ENCODE measurements at regions of chr3 and their contacts with region 1.

Region 1: DNA sequence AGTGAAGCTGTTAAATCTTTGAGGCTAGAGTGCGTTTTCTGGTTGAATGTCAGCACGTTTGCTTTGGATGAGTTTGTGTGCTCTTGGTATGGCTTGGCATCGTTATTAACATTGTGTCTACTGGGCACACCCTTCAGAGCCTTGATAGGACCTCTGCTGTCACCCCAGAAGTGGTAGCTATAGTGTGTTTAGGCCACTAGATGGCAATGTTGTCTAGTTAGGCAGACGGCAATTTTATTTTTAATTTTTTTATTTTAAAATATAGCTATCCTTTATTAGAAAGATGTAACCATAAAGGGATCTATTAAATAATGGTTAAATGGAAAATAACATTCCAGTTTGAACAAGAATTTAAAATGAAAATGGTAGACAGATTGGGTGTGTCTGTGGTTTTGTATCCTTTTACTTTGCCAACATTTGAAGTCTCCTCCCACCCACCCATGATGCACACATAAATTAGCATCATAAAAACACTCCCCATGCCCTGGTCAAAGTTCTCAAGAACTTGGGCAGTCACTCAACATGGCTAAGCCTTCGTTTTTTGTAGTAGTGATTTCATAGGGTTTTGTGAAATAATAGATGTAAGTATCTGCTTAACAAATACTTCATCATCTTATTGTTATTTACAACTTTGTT is 200.7 kb downstream of the KCNH8 start:
- DNase-seq: peak in 3 of 9 donors; percentile 2 to 8 (median 2)
- ATAC-seq: peak; percentile 65
- H3K4me3 ChIP-seq: no peak overlapping the region
- H3K4me3 Mint-ChIP-seq: no peak overlapping the region
- H3K27ac ChIP-seq: no peak overlapping the region
- H3K27ac Mint-ChIP-seq: no peak overlapping the region
- H3K4me1 ChIP-seq: no peaks in the 10 kb centered on the region
- H3K4me1 Mint-ChIP-seq: no peaks in the 10 kb centered on the region
- H3K27me3 ChIP-seq: no peaks in the 10 kb centered on the region
- H3K27me3 Mint-ChIP-seq: peaks cover 0 to 12% (median 3%) of the 10 kb centered on the region in 5 donors

Region 2: GRCh38 chr3:19364148-19364547 is 15.1 kb after region 1 on chr3:
- CTCF ChIA-PET with region 1: no interaction called
- POLR2A ChIA-PET with region 1: no interaction called
- intact Hi-C with region 1: no loop called
- DNase-seq: no peak
- ATAC-seq: no peak
- H3K4me3 ChIP-seq: no peak overlapping the region
- H3K4me3 Mint-ChIP-seq: no peak overlapping the region
- H3K27ac ChIP-seq: no peak overlapping the region
- H3K27ac Mint-ChIP-seq: no peak overlapping the region
- H3K4me1 ChIP-seq: no peaks in the 10 kb centered on the region
- H3K4me1 Mint-ChIP-seq: no peaks in the 10 kb centered on the region
- H3K27me3 ChIP-seq: no peaks in the 10 kb centered on the region
- H3K27me3 Mint-ChIP-seq: peaks cover 0 to 5% (median 0%) of the 10 kb centered on the region in 5 donors

Region 3: GRCh38 chr3:19543212-19543841 is 194.3 kb after region 1 on chr3:
- CTCF ChIA-PET with region 1: interaction called, 3 read pairs
- POLR2A ChIA-PET with region 1: no interaction called
- intact Hi-C with region 1: loop called in 1 of 2 experiments (anchors 1 kb)
- DNase-seq: no peak
- ATAC-seq: no peak
- H3K4me3 ChIP-seq: no peak overlapping the region
- H3K4me3 Mint-ChIP-seq: no peak overlapping the region
- H3K27ac ChIP-seq: no peak overlapping the region
- H3K27ac Mint-ChIP-seq: no peak overlapping the region
- H3K4me1 ChIP-seq: no peaks in the 10 kb centered on the region
- H3K4me1 Mint-ChIP-seq: peaks cover 0 to 6% (median 0%) of the 10 kb centered on the region in 7 donors
- H3K27me3 ChIP-seq: no peaks in the 10 kb centered on the region
- H3K27me3 Mint-ChIP-seq: peaks cover 0 to 8% (median 4%) of the 10 kb centered on the region in 5 donors

Region 4: GRCh38 chr3:19866751-19867347 is 517.8 kb after region 1 on chr3:
- CTCF ChIA-PET with region 1: no interaction called
- POLR2A ChIA-PET with region 1: no interaction called
- intact Hi-C with region 1: loop called (anchors 1 kb)
- DNase-seq: peak in 6 of 9 donors; percentile 26 to 56 (median 33)
- ATAC-seq: peak; percentile 52
- H3K4me3 ChIP-seq: no peak overlapping the region
- H3K4me3 Mint-ChIP-seq: no peak overlapping the region
- H3K27ac ChIP-seq: no peak overlapping the region
- H3K27ac Mint-ChIP-seq: no peak overlapping the region
- H3K4me1 ChIP-seq: no peaks in the 10 kb centered on the region
- H3K4me1 Mint-ChIP-seq: peaks cover 0 to 4% (median 0%) of the 10 kb centered on the region in 7 donors
- H3K27me3 ChIP-seq: peaks cover 0 to 4% of the 10 kb centered on the region in 2 donors
- H3K27me3 Mint-ChIP-seq: peaks cover 14 to 24% (median 15%) of the 10 kb centered on the region in 5 donors